Heart left ventricle (tissue), 16 donors: ENCODE measurements at regions of chrX and their contacts with region 1.

Region 1: GRCh38 chrX:3757510-3758025 is 44.1 kb upstream of the PRKX start:
- DNase-seq: no peak
- ATAC-seq: no peak
- H3K4me3 ChIP-seq: no peak overlapping the region
- H3K27ac ChIP-seq: no peak overlapping the region
- H3K4me1 ChIP-seq: no peaks in the 10 kb centered on the region
- H3K27me3 ChIP-seq: no peaks in the 10 kb centered on the region
- CTCF ChIP-seq: no peak
- POLR2A ChIP-seq: no peak

Region 2: DNA sequence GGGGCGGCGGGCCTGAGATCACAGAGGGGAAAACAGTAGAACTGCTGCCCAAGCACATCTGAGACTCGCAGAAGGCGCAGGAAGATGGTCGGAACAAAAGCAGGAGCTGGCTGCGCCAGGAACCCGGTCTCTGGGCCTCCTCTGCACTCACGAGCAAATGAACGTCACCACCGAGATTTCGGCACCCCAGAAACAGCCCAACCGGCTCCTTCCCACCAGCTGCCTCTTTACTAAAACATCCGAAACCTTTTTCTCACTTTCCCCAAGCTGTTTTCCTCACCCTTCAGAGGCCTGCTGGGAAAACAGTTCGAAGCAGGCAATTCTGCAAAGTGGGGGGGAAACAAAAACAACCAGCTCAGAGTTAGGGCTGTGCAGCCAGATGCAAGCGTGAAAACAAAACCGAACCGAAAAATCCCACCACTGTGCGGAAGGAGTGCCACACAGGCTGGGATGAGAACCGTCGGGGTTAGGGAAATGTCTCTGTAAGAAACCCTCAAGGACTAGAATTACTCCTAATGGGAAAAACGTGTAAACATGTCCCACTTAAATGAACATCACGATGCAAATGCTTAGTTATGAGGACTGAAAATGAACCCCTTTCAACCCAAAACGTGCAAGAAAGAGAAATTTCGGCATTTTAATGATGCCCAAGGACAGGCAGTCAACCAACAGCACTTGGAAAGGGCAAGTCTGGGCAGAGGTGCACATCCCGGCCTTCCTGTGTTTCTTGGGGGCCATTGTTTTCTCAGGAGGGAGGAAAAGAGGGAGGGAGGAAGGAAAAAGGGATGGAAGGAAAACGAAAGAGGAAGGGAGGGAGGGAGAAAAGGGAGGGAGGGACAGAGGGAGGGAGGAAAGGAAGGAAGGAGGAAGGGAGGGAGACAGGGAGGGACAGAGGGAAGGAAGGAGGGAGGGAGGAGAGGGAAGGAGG is 1272.6 kb before region 1 on chrX:
- intact Hi-C with region 1: no loop called
- DNase-seq: no peak
- ATAC-seq: peak; percentile 33 to 60 (median 49)
- H3K4me3 ChIP-seq: peak overlapping the region in 10 of 12 donors; percentile 16 to 46 (median 32)
- H3K27ac ChIP-seq: peak overlapping the region; percentile 35 to 78 (median 70)
- H3K4me1 ChIP-seq: peaks cover 0 to 28% (median 11%) of the 10 kb centered on the region in 12 donors
- H3K27me3 ChIP-seq: no peaks in the 10 kb centered on the region
- CTCF ChIP-seq: no peak
- POLR2A ChIP-seq: no peak

Region 3: GRCh38 chrX:3094261-3094660 is 663.3 kb before region 1 on chrX:
- intact Hi-C with region 1: loop called in 1 of 10 experiments (anchors 10 kb)
- DNase-seq: no peak
- ATAC-seq: no peak
- H3K4me3 ChIP-seq: no peak overlapping the region
- H3K27ac ChIP-seq: no peak overlapping the region
- H3K4me1 ChIP-seq: no peaks in the 10 kb centered on the region
- H3K27me3 ChIP-seq: no peaks in the 10 kb centered on the region
- CTCF ChIP-seq: no peak
- POLR2A ChIP-seq: no peak

Region 4: DNA sequence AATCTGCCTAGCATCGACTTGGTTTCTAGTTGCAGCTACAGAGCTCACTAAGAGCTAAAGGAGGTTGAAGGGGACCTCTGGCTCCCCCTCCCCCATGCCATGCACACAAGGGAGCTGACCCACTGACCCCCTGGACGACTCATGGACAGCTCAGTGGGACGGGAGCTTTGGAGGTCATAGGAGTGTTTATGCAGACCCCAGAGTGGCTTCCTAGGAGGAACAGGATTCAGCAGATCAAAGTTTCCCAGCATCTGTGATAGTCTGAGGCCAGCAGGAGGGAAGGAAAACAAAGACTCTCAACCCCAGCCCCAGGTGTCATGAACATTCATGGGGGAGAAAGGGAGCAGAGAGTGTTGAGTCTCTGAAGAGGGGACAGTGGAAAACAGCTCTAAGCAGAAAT is 611.9 kb before region 1 on chrX:
- intact Hi-C with region 1: no loop called
- DNase-seq: no peak
- ATAC-seq: no peak
- H3K4me3 ChIP-seq: no peak overlapping the region
- H3K27ac ChIP-seq: no peak overlapping the region
- H3K4me1 ChIP-seq: no peaks in the 10 kb centered on the region
- H3K27me3 ChIP-seq: no peaks in the 10 kb centered on the region
- CTCF ChIP-seq: no peak
- POLR2A ChIP-seq: no peak